HCT116 (cell line): ENCODE measurements at regions of chr12 and their contacts with region 1.

Region 1: DNA sequence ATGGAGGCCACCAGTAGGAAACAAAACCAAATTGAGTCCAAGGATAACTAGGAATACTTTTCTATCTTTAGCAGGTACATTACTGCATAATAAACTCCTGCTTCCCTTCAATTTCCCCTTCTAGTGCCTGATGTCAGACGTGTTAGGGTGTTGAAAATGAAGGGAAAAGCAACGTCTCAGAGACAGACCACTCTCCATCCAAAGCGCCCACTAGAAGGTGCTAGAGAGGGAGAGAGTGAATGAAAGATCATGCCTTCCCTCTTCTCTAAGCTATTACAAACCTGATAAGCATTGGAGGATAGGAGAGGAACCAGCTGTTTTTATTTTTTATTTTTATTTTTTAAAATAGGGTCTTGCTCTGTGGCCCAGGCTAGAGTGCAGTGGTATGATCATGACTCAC is 64.1 kb downstream of the ZNF641 start:
- DNase-seq: no peak
- ATAC-seq: peak; percentile 81
- H3K4me3 ChIP-seq: no peak overlapping the region
- H3K27ac ChIP-seq: no peak overlapping the region
- H3K4me1 ChIP-seq: no peaks in the 10 kb centered on the region
- H3K27me3 ChIP-seq: no peaks in the 10 kb centered on the region
- CTCF ChIP-seq: peak; percentile 4 to 59 (median 55); a peak in 4 of 6 replicates
- POLR2A ChIP-seq: no peak
- RAD21 ChIP-seq: peak; percentile 36

Region 2: GRCh38 chr12:47698055-47698454 is 588.6 kb before region 1 on chr12:
- CTCF ChIA-PET with region 1: no interaction called
- POLR2A ChIA-PET with region 1: no interaction called
- RAD21 ChIA-PET with region 1: no interaction called
- intact Hi-C with region 1: no loop called
- DNase-seq: no peak
- ATAC-seq: no peak
- H3K4me3 ChIP-seq: no peak overlapping the region
- H3K27ac ChIP-seq: no peak overlapping the region
- H3K4me1 ChIP-seq: no peaks in the 10 kb centered on the region
- H3K27me3 ChIP-seq: no peaks in the 10 kb centered on the region
- CTCF ChIP-seq: no peak
- POLR2A ChIP-seq: no peak
- RAD21 ChIP-seq: no peak

Region 3: DNA sequence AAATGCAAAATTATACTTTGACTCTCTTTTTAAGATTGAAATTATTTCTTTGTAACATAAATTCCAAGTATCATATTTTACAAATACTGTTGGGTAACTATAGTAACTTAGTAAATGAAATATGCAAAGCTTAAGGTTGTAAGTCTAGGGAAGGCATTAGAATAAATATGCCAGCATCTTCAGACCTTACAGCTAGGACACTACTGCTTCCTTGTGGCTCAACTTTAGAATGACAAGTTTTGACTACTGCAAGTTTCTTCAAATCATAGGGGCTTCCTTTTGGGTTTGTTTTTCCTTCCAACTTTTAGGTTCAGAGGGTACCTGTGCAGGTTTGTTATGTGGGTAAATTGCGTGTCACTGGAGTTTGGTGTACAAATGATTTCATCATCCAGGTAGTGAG is 168.0 kb after region 1 on chr12:
- CTCF ChIA-PET with region 1: interaction called, 3 read pairs
- POLR2A ChIA-PET with region 1: no interaction called
- RAD21 ChIA-PET with region 1: no interaction called
- intact Hi-C with region 1: loop called (anchors 10 kb)
- DNase-seq: peak; percentile 31
- ATAC-seq: peak; percentile 71
- H3K4me3 ChIP-seq: no peak overlapping the region
- H3K27ac ChIP-seq: no peak overlapping the region
- H3K4me1 ChIP-seq: no peaks in the 10 kb centered on the region
- H3K27me3 ChIP-seq: no peaks in the 10 kb centered on the region
- CTCF ChIP-seq: peak; percentile 39 to 60 (median 56); a peak in 4 of 6 replicates
- POLR2A ChIP-seq: no peak
- RAD21 ChIP-seq: peak; percentile 72